Caco-2 (cell line): ENCODE measurements at regions of chr11 and their contacts with region 1.

Region 1: DNA sequence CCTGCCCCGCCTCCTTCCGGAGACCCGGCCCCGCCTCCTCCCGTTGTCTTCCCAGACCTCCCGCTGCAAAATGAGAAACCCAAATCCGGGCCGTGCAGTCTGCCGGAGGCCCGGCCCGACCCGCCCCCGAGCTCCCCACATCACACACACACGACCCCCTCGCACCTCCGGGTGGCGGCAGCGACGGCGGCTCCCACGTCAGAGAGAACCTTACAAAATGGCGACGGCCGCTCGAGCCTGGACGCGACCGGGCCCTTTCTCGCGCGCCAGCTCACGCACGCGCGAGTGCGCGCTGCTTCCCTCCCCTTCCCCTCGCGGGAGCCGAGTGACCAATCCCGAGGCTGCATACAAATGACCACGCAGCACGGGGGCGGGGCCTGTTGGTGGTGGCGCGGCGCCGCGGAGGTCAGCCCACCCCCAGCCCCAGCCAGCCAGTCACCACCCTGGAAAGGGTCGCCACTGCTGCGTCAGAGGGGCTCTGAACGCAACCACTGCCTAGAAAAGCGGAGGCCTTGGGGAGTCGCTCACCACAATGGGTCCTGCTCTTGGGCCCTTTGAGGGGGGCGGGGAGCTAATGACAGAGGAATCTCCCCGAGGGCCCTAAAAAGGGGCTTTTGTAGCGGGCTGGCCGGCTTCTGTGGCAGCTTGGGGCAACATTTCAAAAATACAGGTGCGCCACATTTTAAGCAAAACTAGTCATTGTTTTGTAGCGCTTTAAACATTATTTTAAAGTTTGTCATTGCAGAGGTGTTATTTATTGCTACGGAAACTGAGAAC is at the start of gene RBM4B:
- DNase-seq: peak; percentile 100
- H3K4me3 ChIP-seq: peak within 1 kb of the TSS; percentile 71
- H3K4me3 Mint-ChIP-seq: peak within 1 kb of the TSS; percentile 94
- H3K27ac Mint-ChIP-seq: peak within 1 kb of the TSS; percentile 98
- H3K4me1 ChIP-seq: peaks cover 21% of the 10 kb centered on the region
- H3K4me1 Mint-ChIP-seq: peaks cover 16% of the 10 kb centered on the region
- H3K27me3 ChIP-seq: no peaks in the 10 kb centered on the region
- H3K27me3 Mint-ChIP-seq: no peaks in the 10 kb centered on the region
- CTCF ChIP-seq: no peak
- total RNA-seq, gene RBM4B: 39.8 and 45.8 TPM in 2 replicates

Region 2: DNA sequence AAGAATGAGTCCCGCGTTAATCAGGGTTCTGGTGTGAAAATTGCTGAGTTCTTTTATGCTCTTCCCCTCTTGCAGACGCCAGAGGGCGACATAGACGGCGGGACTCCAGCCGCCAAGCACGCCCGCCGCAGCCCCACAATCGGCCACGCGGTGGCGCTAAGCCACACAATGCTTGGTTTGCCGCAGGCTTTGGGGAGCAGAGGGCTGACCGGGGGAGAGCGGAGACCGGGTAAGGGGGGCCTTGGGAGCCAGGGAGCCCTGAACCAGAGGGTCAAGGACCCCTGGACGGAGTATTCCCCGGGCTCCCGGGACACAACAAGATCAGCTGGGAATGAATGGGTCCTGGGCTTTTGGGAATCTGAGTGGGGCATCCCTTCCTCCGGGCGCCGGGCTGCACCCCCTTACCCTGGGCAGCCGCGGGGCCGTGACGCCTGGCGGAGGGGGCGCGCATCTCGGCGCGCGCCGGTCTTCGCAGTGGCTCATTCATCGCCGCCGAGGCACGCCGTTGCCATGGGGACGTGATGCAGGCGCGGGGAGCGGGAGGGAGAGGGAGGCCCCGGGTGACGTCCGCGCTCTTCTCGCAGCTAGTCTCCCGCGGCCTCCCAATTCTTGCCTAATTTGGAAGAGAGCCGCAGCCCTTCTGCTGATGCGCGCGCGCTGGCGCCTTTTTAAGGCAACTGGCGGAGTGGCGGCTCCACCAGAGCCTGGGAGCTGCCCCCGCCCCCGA is 269.1 kb before region 1 on chr11:
- CTCF ChIA-PET with region 1: interaction called, 8 read pairs
- POLR2A ChIA-PET with region 1: interaction called, 5 read pairs
- intact Hi-C with region 1: loop called (anchors 1 kb)
- DNase-seq: peak; percentile 76 to 93
- H3K4me3 ChIP-seq: peak overlapping the region; percentile 19
- H3K4me3 Mint-ChIP-seq: peak overlapping the region; percentile 73
- H3K27ac Mint-ChIP-seq: no peak overlapping the region
- H3K4me1 ChIP-seq: no peaks in the 10 kb centered on the region
- H3K4me1 Mint-ChIP-seq: no peaks in the 10 kb centered on the region
- H3K27me3 ChIP-seq: no peaks in the 10 kb centered on the region
- H3K27me3 Mint-ChIP-seq: peaks cover 28% of the 10 kb centered on the region
- CTCF ChIP-seq: peak; percentile 99 to 100

Region 3: GRCh38 chr11:66466225-66467027 is 211.4 kb before region 1 on chr11 and contains the start of gene PELI3:
- CTCF ChIA-PET with region 1: interaction called, 17 read pairs
- POLR2A ChIA-PET with region 1: interaction called, 5 read pairs
- intact Hi-C with region 1: no loop called
- DNase-seq: peak; percentile 97
- H3K4me3 ChIP-seq: peak within 1 kb of the TSS; percentile 66
- H3K4me3 Mint-ChIP-seq: peak within 1 kb of the TSS; percentile 90
- H3K27ac Mint-ChIP-seq: peak within 1 kb of the TSS; percentile 62
- H3K4me1 ChIP-seq: peaks cover 19% of the 10 kb centered on the region
- H3K4me1 Mint-ChIP-seq: peaks cover 17% of the 10 kb centered on the region
- H3K27me3 ChIP-seq: no peaks in the 10 kb centered on the region; the same call in 1 of the 2 replicates
- H3K27me3 Mint-ChIP-seq: no peaks in the 10 kb centered on the region
- CTCF ChIP-seq: no peak
- total RNA-seq, gene PELI3: 21.0 and 21.1 TPM in 2 replicates

Region 4: GRCh38 chr11:66545701-66546367 is 132.0 kb before region 1 on chr11 and contains the start of gene ZDHHC24:
- CTCF ChIA-PET with region 1: interaction called, 31 read pairs
- POLR2A ChIA-PET with region 1: interaction called, 20 read pairs
- intact Hi-C with region 1: loop called (anchors 1 kb)
- DNase-seq: peak; percentile 99
- H3K4me3 ChIP-seq: peak within 1 kb of the TSS; percentile 59
- H3K4me3 Mint-ChIP-seq: peak within 1 kb of the TSS; percentile 84
- H3K27ac Mint-ChIP-seq: peak within 1 kb of the TSS; percentile 60
- H3K4me1 ChIP-seq: peaks cover 22% of the 10 kb centered on the region
- H3K4me1 Mint-ChIP-seq: peaks cover 15% of the 10 kb centered on the region
- H3K27me3 ChIP-seq: no peaks in the 10 kb centered on the region
- H3K27me3 Mint-ChIP-seq: no peaks in the 10 kb centered on the region
- CTCF ChIP-seq: no peak
- total RNA-seq, gene ZDHHC24: 25.1 and 26.9 TPM in 2 replicates

Region 5: DNA sequence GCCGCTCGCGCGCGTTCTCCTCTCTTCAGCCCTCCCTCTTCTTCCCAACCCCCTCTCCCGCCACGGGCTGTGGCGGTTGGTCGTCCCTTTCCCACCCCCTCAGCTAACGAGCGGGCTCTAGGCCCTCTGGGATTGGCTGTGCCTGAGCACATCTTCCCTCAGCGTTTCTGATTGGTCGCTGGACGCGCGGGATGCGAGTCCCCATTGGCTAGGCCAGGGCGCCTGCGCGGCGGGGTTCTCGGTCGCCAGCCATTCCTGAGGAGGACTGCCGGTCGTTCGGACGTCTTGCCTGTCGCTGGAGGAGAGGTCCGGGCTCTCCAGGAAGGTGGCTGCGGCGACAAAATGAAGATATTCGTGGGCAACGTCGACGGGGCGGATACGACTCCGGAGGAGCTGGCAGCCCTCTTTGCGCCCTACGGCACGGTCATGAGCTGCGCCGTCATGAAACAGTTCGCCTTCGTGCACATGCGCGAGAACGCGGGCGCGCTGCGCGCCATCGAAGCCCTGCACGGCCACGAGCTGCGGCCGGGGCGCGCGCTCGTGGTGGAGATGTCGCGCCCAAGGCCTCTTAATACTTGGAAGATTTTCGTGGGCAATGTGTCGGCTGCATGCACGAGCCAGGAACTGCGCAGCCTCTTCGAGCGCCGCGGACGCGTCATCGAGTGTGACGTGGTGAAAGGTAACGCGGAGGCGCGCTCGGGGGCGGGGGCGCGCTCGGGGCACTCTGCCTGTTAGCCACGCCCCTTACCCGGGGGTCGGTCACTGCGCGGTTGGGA is 61.2 kb before region 1 on chr11 and contains the start of gene RBM14:
- CTCF ChIA-PET with region 1: interaction called, 10 read pairs
- POLR2A ChIA-PET with region 1: interaction called, 48 read pairs
- intact Hi-C with region 1: loop called (anchors 1 kb)
- DNase-seq: peak; percentile 100
- H3K4me3 ChIP-seq: peak within 1 kb of the TSS; percentile 57
- H3K4me3 Mint-ChIP-seq: peak within 1 kb of the TSS; percentile 94
- H3K27ac Mint-ChIP-seq: peak within 1 kb of the TSS; percentile 99
- H3K4me1 ChIP-seq: peaks cover 17% of the 10 kb centered on the region
- H3K4me1 Mint-ChIP-seq: peaks cover 25% of the 10 kb centered on the region
- H3K27me3 ChIP-seq: no peaks in the 10 kb centered on the region
- H3K27me3 Mint-ChIP-seq: no peaks in the 10 kb centered on the region
- CTCF ChIP-seq: no peak
- total RNA-seq, gene RBM14: 160 and 173 TPM in 2 replicates

Region 6: GRCh38 chr11:66659763-66660162 is 18.0 kb before region 1 on chr11:
- CTCF ChIA-PET with region 1: interaction called, 6 read pairs
- POLR2A ChIA-PET with region 1: interaction called, 19 read pairs
- intact Hi-C with region 1: no loop called
- DNase-seq: no peak
- H3K4me3 ChIP-seq: no peak overlapping the region
- H3K4me3 Mint-ChIP-seq: peak overlapping the region; percentile 1
- H3K27ac Mint-ChIP-seq: peak overlapping the region; percentile 1
- H3K4me1 ChIP-seq: peaks cover 8% of the 10 kb centered on the region
- H3K4me1 Mint-ChIP-seq: peaks cover 12% of the 10 kb centered on the region
- H3K27me3 ChIP-seq: no peaks in the 10 kb centered on the region
- H3K27me3 Mint-ChIP-seq: no peaks in the 10 kb centered on the region
- CTCF ChIP-seq: no peak

Region 7: DNA sequence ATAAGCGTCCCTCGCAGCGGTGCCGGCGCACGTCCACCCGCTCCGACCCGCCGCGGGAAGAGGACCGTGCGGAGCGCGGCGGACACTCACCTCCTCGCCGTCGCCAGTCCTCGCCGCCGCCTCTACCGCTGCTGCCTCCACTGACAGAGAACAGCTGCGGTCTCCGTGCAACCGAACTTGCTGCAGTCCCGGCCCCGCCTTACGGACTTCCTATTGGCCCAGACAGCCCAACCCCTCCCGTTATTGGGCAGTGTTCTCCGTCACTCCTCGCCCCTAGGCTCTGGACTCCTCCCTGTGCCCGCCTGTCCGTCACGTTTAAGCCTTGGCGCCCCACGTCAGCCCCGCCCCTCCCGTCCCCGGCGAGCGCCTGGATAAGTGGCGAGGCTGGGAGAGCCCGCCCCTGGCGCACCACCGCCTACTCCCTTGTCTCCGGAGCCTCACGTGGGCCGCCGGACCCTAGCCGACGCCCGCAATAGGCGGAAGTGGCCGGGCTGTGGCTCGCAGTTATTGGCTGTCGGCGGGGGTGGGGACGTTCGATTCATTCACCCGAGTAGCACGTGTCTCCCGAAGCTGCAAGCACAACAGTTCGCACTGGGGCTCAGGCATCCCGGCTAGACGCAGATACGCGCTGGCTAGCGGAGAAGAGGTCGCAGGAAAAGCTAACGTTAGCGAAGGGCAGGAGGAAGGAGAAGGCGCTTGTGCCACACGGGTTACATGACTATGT is 280.6 kb after region 1 on chr11 and contains the start of gene PC:
- CTCF ChIA-PET with region 1: interaction called, 11 read pairs
- POLR2A ChIA-PET with region 1: no interaction called
- intact Hi-C with region 1: no loop called
- DNase-seq: peak; percentile 100
- H3K4me3 ChIP-seq: peak within 1 kb of the TSS; percentile 58
- H3K4me3 Mint-ChIP-seq: peak within 1 kb of the TSS; percentile 77
- H3K27ac Mint-ChIP-seq: peak within 1 kb of the TSS; percentile 64
- H3K4me1 ChIP-seq: peaks cover 12% of the 10 kb centered on the region
- H3K4me1 Mint-ChIP-seq: peaks cover 22% of the 10 kb centered on the region
- H3K27me3 ChIP-seq: no peaks in the 10 kb centered on the region
- H3K27me3 Mint-ChIP-seq: no peaks in the 10 kb centered on the region
- CTCF ChIP-seq: no peak
- total RNA-seq, gene PC: 22.5 and 25.8 TPM in 2 replicates